Naive thymus-derived CD8-positive, alpha-beta T cell (primary cell): ENCODE measurements at regions of chr21 and their contacts with region 1.

Region 1: DNA sequence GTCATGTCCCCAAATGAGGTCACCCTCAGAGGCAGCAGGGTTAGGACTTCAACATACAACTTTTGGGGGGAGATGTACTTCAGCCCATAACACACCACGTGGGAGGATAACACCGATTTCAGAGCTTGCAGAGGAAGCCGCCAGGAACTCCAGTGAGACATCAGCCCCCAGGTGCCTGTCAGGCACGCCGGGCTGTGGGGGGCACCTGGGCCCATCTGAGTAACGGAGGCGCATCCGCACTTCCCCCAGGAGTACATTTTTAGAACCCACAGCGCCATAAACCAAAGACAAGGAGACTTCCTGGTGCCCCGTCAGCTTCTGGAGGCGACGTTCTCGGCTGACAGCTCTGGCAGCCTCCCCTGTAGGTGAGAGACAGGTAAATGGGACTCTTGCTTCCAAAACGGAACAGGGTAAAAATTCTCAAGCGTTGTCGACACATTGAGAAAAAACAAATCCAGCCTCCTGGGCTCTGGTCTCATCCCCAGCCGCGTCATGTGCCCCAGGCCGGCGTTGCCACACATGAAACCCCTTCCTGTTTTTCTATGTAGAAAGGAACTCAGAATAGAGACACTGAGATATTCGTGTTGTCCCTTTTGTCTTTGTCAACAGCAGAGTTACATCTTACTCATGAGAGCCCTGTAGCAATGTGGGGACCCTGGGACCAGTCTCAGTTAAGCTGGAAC is 93.3 kb downstream of the PDE9A start:
- DNase-seq: peak; percentile 30 to 85 (median 64)
- ATAC-seq: peak; percentile 80 to 83
- H3K4me3 Mint-ChIP-seq: peak overlapping the region; percentile 74 to 88 (median 81)
- H3K27ac Mint-ChIP-seq: peak overlapping the region; percentile 95 to 100 (median 98)
- H3K4me1 Mint-ChIP-seq: peaks cover 15 to 46% (median 36%) of the 10 kb centered on the region in 4 donors
- H3K27me3 Mint-ChIP-seq: no peaks in the 10 kb centered on the region

Region 2: DNA sequence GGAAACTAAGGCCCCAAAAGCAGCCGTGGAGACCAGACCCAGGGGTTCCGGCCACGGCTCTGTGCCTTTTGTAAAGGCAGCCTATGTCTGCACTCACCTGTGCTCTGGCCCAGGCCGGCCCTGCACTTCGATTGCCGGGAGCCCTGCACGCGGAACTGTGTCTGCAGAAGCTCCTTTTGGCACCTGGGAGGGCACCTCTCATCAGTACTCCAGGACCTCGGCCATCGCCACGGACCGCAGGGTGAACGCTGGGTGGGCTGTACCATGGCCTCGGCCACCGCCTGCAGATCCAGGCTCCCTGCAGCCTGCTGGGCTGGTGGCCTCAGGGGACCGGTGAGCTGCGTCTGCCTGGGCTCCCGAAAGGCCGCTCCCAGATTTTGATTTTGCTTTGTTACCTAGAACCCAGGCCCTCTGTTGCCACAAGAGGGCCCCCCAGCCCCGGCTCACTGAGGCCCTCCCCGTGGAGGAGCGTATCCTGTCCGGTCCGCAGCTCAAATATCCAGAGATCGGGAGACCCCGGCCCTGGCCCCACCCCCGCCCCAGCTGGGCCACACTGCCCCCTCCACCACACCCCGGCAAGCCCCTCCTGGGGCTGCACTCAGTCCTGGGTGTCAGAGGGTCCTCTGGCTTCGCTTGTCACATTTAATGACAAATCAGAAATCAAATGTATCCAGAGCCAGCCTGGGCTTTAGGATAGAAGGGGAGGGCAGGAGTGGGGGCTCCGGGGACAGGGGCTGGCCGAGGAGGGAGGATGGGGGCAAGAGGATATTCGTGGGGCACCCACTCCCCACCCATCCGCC is 153.5 kb before region 1 on chr21:
- POLR2A ChIA-PET with region 1: no interaction called
- DNase-seq: peak; percentile 40 to 82 (median 61)
- ATAC-seq: peak; percentile 81 to 96
- H3K4me3 Mint-ChIP-seq: no peak overlapping the region
- H3K27ac Mint-ChIP-seq: peak overlapping the region in 1 of 10 donors; percentile 73
- H3K4me1 Mint-ChIP-seq: peaks cover 9 to 22% (median 19%) of the 10 kb centered on the region in 4 donors
- H3K27me3 Mint-ChIP-seq: peaks cover 0 to 2% (median 0%) of the 10 kb centered on the region in 5 donors

Region 3: GRCh38 chr21:42652527-42653230 is 94.1 kb before region 1 on chr21:
- POLR2A ChIA-PET with region 1: interaction called, 12 read pairs
- DNase-seq: peak in 1 of 10 donors; percentile 62
- ATAC-seq: no peak
- H3K4me3 Mint-ChIP-seq: peak overlapping the region; percentile 71 to 90 (median 81)
- H3K27ac Mint-ChIP-seq: peak overlapping the region in 9 of 10 donors; percentile 20 to 84 (median 46)
- H3K4me1 Mint-ChIP-seq: peaks cover 20 to 32% (median 27%) of the 10 kb centered on the region in 4 donors
- H3K27me3 Mint-ChIP-seq: peaks cover 0 to 11% (median 0%) of the 10 kb centered on the region in 5 donors

Region 4: DNA sequence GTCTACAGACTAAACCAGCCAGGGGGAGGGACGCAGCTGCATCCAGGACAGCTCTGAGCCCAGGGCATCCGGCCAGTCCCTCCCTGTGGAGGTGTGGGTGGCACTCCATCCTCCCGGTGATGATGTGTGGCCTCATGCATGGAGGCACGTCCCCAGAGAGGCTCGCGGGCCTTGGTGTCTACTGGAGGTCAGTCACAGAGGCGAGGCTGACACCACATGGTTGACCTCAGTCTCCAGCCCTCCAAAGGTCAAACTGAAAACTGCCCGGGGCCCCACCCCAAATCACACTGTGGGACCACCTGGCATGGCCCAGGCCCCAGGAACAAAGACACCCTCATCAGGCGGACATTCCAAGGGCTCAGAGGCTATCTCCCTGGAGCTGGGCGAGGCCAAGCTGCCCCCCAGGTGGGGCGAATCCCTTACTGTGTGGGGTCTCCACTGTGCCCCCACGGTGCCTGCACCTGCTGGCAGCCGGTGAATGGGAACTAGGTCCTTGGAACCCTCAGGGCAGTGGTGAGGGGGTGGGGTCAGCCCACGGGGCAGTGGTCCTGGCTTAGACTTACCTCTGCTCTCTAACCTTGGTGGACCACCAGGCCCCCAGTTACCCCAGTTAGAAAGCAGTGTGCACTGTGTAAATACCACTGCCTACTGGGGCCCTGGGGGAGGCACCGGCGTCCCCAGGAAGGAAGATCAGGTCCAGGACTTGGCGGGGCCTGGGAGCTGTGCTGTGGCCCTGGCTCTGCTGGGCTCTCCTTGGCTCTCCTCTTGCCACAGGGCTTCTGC is 1655.8 kb after region 1 on chr21:
- POLR2A ChIA-PET with region 1: no interaction called
- DNase-seq: no peak
- ATAC-seq: no peak
- H3K4me3 Mint-ChIP-seq: no peak overlapping the region
- H3K27ac Mint-ChIP-seq: peak overlapping the region in 1 of 10 donors; percentile 53
- H3K4me1 Mint-ChIP-seq: peaks cover 0 to 5% (median 3%) of the 10 kb centered on the region in 4 donors
- H3K27me3 Mint-ChIP-seq: no peaks in the 10 kb centered on the region